Gastrocnemius medialis (tissue), 4 donors: ENCODE measurements at regions of chr17 and their contacts with region 1.

Region 1: GRCh38 chr17:37047631-37048104 is 98.9 kb downstream of the AATF start:
- DNase-seq: peak; percentile 54 to 73
- ATAC-seq: peak; percentile 62 to 91
- H3K4me3 ChIP-seq: no peak overlapping the region
- H3K27ac ChIP-seq: no peak overlapping the region
- H3K4me1 ChIP-seq: peaks cover 0 to 5% of the 10 kb centered on the region in 2 donors
- H3K27me3 ChIP-seq: no peaks in the 10 kb centered on the region
- CTCF ChIP-seq: peak; percentile 55 to 88 (median 80)
- POLR2A ChIP-seq: no peak

Region 2: DNA sequence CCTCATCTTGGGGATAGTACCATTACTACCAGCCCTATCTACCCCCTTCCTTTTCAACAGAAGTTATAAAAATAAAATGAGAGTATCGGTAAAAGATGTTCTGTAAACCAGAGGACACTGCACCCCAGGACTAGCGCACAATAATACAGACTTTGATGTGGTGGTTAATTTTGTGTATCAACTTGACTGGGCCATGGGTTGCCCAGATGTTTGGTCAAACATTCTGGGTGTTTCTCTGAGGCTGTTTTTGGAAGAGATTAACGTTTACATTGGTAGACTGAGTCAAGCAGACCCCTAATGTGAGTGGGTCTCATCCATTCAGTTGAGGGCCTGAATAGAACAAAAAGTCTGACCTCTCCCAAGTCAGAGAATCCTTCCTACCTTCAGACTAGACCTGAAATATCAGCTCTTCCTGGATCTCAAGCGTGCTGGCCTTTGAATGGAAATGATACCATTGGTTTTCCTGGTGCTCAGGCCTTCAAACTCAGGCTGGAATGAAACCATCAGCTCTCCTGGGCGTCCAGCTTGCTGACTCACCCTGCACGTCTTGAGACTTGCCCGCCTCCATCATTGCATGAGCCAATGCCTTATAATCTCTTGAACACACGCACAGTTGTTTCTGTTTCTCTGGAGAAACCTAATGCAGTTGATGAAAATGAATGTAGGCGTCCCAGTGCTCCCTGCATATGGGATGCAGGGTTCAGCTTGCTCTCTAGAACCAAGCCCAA is 436.2 kb before region 1 on chr17:
- in situ Hi-C with region 1: loop called in 1 of 4 experiments (anchors 10 kb)
- intact Hi-C with region 1: no loop called
- DNase-seq: no peak
- ATAC-seq: no peak
- H3K4me3 ChIP-seq: no peak overlapping the region
- H3K27ac ChIP-seq: no peak overlapping the region
- H3K4me1 ChIP-seq: peaks cover 19 to 24% of the 10 kb centered on the region in 2 donors
- H3K27me3 ChIP-seq: no peaks in the 10 kb centered on the region
- CTCF ChIP-seq: no peak
- POLR2A ChIP-seq: no peak

Region 3: GRCh38 chr17:37067555-37068111 is 20.0 kb after region 1 on chr17:
- in situ Hi-C with region 1: no loop called
- intact Hi-C with region 1: no loop called
- DNase-seq: peak; percentile 78 to 83
- ATAC-seq: peak; percentile 90 to 93
- H3K4me3 ChIP-seq: peak overlapping the region in 2 of 4 donors; percentile 10 to 28
- H3K27ac ChIP-seq: peak overlapping the region in 2 of 4 donors; percentile 40 to 64
- H3K4me1 ChIP-seq: peaks cover 13 to 14% of the 10 kb centered on the region in 2 donors
- H3K27me3 ChIP-seq: peaks cover 0 to 8% (median 7%) of the 10 kb centered on the region in 3 donors
- CTCF ChIP-seq: no peak
- POLR2A ChIP-seq: peak in 1 of 2 donors; percentile 10

Region 4: GRCh38 chr17:37089956-37090355 is 42.3 kb after region 1 on chr17:
- in situ Hi-C with region 1: no loop called
- intact Hi-C with region 1: no loop called
- DNase-seq: no peak
- ATAC-seq: no peak
- H3K4me3 ChIP-seq: no peak overlapping the region
- H3K27ac ChIP-seq: no peak overlapping the region
- H3K4me1 ChIP-seq: peaks cover 7% of the 10 kb centered on the region in 2 donors
- H3K27me3 ChIP-seq: no peaks in the 10 kb centered on the region
- CTCF ChIP-seq: no peak
- POLR2A ChIP-seq: no peak

Region 5: DNA sequence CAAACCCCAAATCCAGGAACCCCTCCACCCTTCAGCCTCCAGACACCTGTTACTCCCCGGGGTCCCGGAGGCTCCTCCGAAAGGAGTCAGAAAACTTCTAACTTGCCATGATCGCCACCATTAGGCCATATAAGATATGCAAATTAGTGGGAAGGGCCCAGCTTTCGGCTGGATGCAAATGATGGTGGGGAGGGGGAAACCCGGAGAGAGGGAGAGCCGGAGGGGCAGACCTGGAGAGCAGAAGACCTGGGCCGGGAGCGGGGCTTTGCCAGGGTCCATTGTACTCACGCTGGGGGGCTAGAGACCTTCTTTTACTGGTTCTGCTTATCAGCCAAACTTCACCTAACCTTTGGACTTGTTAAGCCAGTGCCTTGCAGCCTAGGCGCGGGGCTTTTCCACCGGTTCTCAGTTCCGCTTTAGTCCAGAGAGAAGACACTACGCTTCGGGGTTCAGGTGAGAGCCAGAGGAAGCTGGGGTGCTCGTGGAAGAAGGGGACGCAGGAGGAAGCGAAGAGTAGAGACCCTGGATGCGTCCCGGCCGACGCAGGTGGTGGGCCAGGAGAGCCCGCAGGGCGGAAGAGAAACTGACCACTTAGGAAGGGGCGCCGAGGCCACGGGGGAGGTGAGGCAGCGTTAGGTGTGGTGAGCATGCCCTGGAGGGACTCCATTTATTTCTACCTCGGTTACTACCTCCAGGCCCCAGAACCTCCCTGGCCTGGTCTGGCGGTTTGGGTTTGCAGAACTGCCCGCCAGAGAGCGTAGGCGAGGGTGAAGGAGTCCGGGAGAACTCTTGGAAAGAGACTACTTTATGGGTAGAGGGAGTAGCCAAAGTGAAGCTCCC is 697.5 kb after region 1 on chr17 and contains the start of gene HNF1B:
- in situ Hi-C with region 1: no loop called
- intact Hi-C with region 1: no loop called
- DNase-seq: no peak
- ATAC-seq: no peak
- H3K4me3 ChIP-seq: peak within 1 kb of the TSS in 1 of 4 donors; percentile 44
- H3K27ac ChIP-seq: no peak within 1 kb of the TSS
- H3K4me1 ChIP-seq: peaks cover 15 to 22% of the 10 kb centered on the region in 2 donors
- H3K27me3 ChIP-seq: peaks cover 65 to 77% (median 76%) of the 10 kb centered on the region in 3 donors
- CTCF ChIP-seq: no peak
- POLR2A ChIP-seq: no peak
- total RNA-seq, gene HNF1B: not detected